ENCODE measurements at regions of chr1 and their contacts with region 1.

Region 1: DNA sequence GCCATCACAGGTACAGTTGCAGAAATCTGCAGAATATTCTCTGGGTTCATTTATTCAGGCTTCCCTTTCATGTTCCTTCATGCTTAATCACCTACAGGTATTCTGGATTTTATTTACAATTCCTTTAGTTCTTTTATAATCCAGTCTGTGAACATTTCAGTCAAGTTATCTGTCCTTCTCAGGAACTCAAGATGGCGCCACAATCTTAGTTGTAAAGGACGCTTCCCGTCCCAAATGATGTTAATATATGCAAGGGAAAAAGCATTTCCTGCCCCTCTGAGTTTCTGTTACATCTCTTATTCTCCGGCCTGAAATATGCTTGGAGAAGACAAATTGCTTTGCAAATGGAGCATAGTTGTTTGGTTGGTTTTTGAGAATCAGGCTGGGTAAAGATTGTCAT is 19.3 kb downstream of the F3 start:
- DNase-seq: no peak
- H3K4me3 ChIP-seq: no peak overlapping the region
- H3K27ac ChIP-seq: no peak overlapping the region
- H3K4me1 ChIP-seq: peaks cover 12% of the 10 kb centered on the region
- H3K27me3 ChIP-seq: no peaks in the 10 kb centered on the region
- CTCF ChIP-seq: peak; percentile 63

Region 2: DNA sequence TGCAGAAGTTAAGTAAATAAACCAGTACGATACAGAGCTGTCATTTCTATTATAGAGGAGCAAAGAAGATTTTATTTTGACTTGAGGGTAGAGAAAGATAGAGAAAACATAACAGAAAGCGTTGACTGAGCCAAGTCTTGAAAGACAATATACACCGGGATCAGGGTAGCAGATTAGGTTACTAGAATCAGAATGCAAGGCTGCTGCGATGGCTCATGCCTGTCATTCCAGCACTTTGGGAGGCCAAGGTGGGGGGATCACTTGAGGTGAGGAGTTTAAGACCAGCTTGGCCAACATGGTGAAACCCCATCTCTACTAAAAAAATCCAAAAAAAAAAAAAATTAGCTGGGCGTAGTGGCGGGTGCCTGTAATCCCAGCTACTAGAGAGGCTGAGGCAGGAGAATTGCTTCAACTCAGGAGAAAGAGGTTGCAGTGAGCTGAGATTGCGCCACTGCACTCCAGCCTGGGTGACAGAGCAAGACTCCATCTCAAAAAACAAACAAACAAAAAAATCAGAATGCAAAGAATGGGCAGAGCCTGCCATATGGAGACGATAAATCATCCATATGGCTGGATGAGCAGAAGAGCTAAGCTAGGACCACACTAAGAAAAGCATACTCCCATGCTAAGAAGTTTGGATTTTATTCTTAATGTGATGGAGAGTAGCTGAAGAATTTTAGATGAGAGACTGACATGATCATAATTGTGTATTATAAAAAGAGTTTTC is 114.0 kb before region 1 on chr1:
- CTCF ChIA-PET with region 1: no interaction called
- POLR2A ChIA-PET with region 1: interaction called, 10 read pairs
- intact Hi-C with region 1: no loop called
- DNase-seq: no peak
- H3K4me3 ChIP-seq: no peak overlapping the region
- H3K27ac ChIP-seq: no peak overlapping the region
- H3K4me1 ChIP-seq: no peaks in the 10 kb centered on the region
- H3K27me3 ChIP-seq: no peaks in the 10 kb centered on the region
- CTCF ChIP-seq: no peak

Measured in PC-9 (cell line).